ENCODE measurements at regions of chr1 and their contacts with region 1.

Region 1: GRCh38 chr1:62175568-62176179 is 19.0 kb upstream of the L1TD1 start:
- DNase-seq: peak; percentile 45 to 71 (median 59)
- H3K4me3 ChIP-seq: no peak overlapping the region
- H3K27ac ChIP-seq: no peak overlapping the region
- H3K4me1 ChIP-seq: no peaks in the 10 kb centered on the region
- H3K27me3 ChIP-seq: no peaks in the 10 kb centered on the region

Region 2: DNA sequence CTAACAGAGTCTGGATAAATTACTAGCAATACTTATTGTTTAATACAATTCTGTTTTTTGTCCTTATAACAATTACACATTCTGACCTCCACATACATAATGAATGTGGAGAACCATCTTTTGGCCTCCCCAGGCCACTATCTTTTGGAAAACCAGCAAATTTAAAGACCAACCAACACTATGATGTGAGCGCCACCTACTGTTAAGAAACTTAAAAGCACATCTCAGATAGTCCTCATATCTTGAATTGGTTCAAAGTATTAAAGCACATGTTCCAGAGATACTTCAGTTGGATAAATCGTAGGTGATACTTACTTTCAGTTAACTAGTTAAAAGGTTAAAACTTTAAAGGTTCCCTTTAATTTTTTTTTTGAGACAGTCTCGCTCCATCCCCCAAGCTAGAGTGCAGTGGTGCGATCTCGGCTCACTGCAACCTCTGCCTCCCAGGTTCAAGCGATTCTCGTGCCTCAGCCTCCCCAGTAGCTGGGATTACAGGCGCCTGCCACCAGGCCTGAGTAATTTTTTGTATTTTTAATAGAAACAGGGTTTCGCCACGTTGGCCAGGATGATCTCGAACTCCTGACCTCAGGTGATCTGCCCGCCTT is 231.8 kb after region 1 on chr1:
- CTCF ChIA-PET with region 1: interaction called, 74 read pairs
- POLR2A ChIA-PET with region 1: interaction called, 5 read pairs
- DNase-seq: peak; percentile 55 to 76 (median 65)
- H3K4me3 ChIP-seq: no peak overlapping the region
- H3K27ac ChIP-seq: no peak overlapping the region
- H3K4me1 ChIP-seq: no peaks in the 10 kb centered on the region
- H3K27me3 ChIP-seq: no peaks in the 10 kb centered on the region

Region 3: DNA sequence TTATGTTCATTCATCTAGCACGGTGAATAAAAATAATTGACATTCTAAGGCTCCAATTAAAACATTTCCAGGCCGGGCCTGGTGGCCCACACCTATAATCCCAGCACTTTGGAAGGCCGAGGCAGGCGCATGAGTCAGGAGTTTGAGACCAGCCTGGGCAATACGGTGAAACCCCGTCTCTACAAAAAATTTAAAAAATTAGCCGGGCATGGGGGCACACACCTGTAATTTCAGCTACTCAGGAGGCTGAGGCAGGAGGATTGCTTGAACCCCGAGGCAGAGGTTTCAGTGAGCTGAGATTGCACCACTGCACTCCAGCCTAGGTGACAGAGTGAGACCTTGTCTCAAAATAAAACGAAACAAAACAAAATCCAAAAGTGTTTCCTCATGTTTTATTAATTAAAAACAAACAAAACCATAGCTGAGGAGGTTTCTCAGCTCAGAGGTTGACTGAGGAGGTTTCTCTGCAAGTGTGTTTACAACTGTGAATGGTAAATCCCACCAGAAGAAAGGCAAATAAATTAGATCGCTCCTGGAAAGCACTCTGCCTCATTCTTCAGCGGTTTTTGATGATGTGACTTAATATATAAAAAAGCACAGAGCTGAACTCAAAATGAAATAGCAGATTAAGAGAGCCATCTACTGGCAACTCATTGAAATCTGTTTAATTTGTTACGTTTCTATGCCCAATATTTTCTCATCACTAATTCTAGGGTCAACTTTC is 570.6 kb after region 1 on chr1:
- CTCF ChIA-PET with region 1: interaction called, 10 read pairs
- POLR2A ChIA-PET with region 1: no interaction called
- DNase-seq: peak; percentile 53 to 74 (median 69)
- H3K4me3 ChIP-seq: peak overlapping the region in 3 of 7 experiments; percentile 29 to 66 (median 40)
- H3K27ac ChIP-seq: no peak overlapping the region
- H3K4me1 ChIP-seq: peaks cover 0 to 1% (median 0%) of the 10 kb centered on the region in 4 experiments
- H3K27me3 ChIP-seq: no peaks in the 10 kb centered on the region

Measured in common myeloid progenitor, CD34-positive (primary cell).